Common myeloid progenitor, CD34-positive (primary cell): ENCODE measurements at regions of chr13 and their contacts with region 1.

Region 1: GRCh38 chr13:41001695-41002094 is 17.4 kb downstream of the ELF1 start:
- DNase-seq: no peak
- H3K4me3 ChIP-seq: peak overlapping the region in 4 of 7 experiments; percentile 7 to 31 (median 20)
- H3K27ac ChIP-seq: peak overlapping the region; percentile 46 to 66
- H3K4me1 ChIP-seq: peaks cover 59 to 87% (median 74%) of the 10 kb centered on the region in 4 experiments
- H3K27me3 ChIP-seq: no peaks in the 10 kb centered on the region

Region 2: GRCh38 chr13:40401911-40402776 is 599.6 kb before region 1 on chr13:
- CTCF ChIA-PET with region 1: no interaction called
- POLR2A ChIA-PET with region 1: no interaction called
- DNase-seq: peak; percentile 88 to 98 (median 97)
- H3K4me3 ChIP-seq: peak overlapping the region in 4 of 7 experiments; percentile 16 to 39 (median 38)
- H3K27ac ChIP-seq: no peak overlapping the region
- H3K4me1 ChIP-seq: peaks cover 5 to 25% (median 14%) of the 10 kb centered on the region in 4 experiments
- H3K27me3 ChIP-seq: no peaks in the 10 kb centered on the region

Region 3: DNA sequence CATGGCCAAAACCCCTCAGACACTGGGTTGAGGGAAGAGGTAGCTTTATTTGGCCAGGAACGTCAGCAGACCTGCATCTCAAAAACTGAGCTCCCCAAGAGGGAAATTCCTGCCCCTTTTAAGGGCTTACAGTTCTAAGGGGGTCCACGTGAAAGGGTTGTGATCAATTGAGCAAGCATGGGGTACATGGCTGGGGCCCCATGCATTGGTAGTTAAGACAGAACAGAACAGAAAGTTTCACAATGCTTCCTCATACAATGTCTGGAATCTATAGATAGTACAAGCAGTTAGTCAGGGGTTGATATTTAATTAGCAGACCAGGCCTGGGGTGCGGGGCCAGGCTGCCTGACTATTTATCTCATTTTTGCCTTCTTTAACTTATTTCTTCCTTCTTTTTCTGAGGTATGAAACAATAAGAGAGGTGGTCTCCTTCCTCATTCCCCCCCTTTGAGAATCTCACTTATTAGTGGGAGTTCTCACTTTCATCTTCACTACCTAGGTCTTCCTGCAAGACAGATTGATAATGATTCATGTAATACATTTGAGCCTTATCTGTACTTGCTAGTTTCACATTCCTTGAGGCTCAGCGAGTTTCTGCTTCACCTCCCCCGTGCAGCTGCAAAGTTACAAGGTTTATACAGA is 127.4 kb before region 1 on chr13:
- CTCF ChIA-PET with region 1: no interaction called
- POLR2A ChIA-PET with region 1: no interaction called
- DNase-seq: peak; percentile 21 to 61 (median 47)
- H3K4me3 ChIP-seq: peak overlapping the region in 1 of 7 experiments; percentile 19
- H3K27ac ChIP-seq: no peak overlapping the region
- H3K4me1 ChIP-seq: no peaks in the 10 kb centered on the region
- H3K27me3 ChIP-seq: no peaks in the 10 kb centered on the region

Region 4: DNA sequence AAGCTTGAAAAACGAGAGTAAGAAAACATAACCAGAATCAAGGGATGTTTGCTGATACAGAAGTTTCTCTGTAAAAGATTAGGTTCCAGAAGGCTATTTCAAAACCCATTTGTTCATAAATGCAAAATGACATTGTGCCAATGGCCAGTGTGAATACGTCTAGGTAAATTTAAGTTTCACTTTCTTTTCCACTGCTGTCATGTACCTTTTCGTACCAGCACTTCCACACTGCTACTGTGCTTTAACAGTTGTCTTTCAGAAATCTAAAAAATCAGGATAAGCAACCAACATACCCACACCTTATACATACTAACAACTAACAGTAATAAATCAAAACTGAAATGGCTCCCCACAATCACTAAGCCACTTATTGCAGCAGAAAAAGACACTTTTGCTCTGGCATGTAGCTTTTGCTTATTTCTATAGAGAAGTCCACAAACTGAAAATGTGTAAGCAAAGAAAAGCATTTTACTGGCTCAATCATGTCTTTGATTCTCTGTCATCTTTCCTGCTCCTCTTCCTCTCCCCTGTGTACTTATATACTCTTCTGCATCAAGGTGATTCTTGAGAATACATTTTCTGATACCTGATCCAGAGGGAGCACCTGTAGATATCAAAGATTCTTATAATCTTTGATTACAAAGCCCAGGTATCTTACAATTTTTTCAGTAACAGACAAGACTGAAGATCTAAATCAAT is 16.9 kb before region 1 on chr13:
- CTCF ChIA-PET with region 1: interaction called, 13 read pairs
- POLR2A ChIA-PET with region 1: interaction called, 3 read pairs
- DNase-seq: peak; percentile 54 to 78 (median 70)
- H3K4me3 ChIP-seq: peak overlapping the region in 6 of 7 experiments; percentile 51 to 97 (median 64)
- H3K27ac ChIP-seq: peak overlapping the region; percentile 98 to 99
- H3K4me1 ChIP-seq: peaks cover 41 to 79% (median 57%) of the 10 kb centered on the region in 4 experiments
- H3K27me3 ChIP-seq: no peaks in the 10 kb centered on the region

Region 5: GRCh38 chr13:41040606-41041319 is 39.1 kb after region 1 on chr13:
- CTCF ChIA-PET with region 1: no interaction called
- POLR2A ChIA-PET with region 1: no interaction called
- DNase-seq: no peak
- H3K4me3 ChIP-seq: no peak overlapping the region
- H3K27ac ChIP-seq: no peak overlapping the region
- H3K4me1 ChIP-seq: no peaks in the 10 kb centered on the region
- H3K27me3 ChIP-seq: no peaks in the 10 kb centered on the region